ENCODE measurements at regions of chr13 and their contacts with region 1.

Region 1: GRCh38 chr13:113785051-113786010 is 26.3 kb downstream of the TMEM255B start:
- DNase-seq: peak; percentile 99
- H3K4me3 ChIP-seq: no peak overlapping the region
- H3K27ac ChIP-seq: peak overlapping the region; percentile 45
- H3K4me1 ChIP-seq: peaks cover 49% of the 10 kb centered on the region
- H3K27me3 ChIP-seq: no peaks in the 10 kb centered on the region
- CTCF ChIP-seq: no peak

Region 2: GRCh38 chr13:113758651-113759524 is 26.4 kb before region 1 on chr13 and contains the start of gene TMEM255B:
- CTCF ChIA-PET with region 1: no interaction called
- dilution Hi-C with region 1: no loop called
- in situ Hi-C with region 1: no loop called
- intact Hi-C with region 1: loop called (anchors 1 kb)
- DNase-seq: peak; percentile 65
- H3K4me3 ChIP-seq: peak within 1 kb of the TSS; percentile 52 to 94 (median 69)
- H3K27ac ChIP-seq: peak within 1 kb of the TSS; percentile 41
- H3K4me1 ChIP-seq: peaks cover 11% of the 10 kb centered on the region
- H3K27me3 ChIP-seq: no peaks in the 10 kb centered on the region
- CTCF ChIP-seq: no peak
- total RNA-seq, gene TMEM255B: 4.2 to 19.0 TPM